ENCODE measurements at regions of chr19 and their contacts with region 1.

Region 1: DNA sequence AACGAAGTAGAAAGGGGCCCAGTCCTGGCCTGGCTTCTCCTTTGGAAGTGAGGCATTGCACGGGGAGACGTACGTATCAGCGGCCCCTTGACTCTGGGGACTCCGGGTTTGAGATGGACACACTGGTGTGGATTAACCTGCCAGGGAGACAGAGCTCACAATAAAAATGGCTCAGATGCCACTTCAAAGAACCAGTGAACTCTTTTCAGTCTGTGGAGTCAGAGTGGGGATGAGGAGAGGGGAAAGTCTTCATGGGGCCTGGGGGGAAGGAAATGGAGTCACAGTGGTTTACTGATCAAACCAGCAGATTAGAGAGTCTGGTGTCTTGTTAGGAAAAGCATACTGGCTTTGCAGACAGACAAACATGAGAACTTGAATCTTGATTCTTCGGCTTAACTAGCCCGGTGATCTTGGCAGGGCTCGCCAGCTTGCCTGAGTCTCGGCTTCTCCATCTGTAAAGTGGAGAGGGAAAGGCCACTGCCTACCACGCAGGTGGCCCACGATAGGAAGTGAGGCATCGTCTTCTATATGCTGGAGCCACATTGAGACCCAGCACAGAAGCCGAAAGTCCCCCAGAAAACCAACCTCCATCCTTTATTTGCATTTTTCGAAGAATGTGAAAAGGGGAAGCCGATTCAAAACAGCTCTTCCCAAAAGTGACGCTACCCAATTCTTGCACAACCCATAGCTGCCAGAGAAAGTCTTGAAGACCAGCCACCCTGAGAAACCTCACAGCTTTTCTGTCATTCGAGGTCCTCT is at the start of gene FFAR1:
- DNase-seq: peak; percentile 64
- ATAC-seq: peak; percentile 66
- H3K4me3 Mint-ChIP-seq: peak within 1 kb of the TSS; percentile 74
- H3K27ac Mint-ChIP-seq: peak within 1 kb of the TSS; percentile 98
- H3K4me1 Mint-ChIP-seq: peaks cover 84% of the 10 kb centered on the region
- H3K27me3 Mint-ChIP-seq: peaks cover 2% of the 10 kb centered on the region
- CTCF ChIP-seq: no peak
- total RNA-seq, gene FFAR1: 5.1 and 6.0 TPM in 2 replicates

Region 2: DNA sequence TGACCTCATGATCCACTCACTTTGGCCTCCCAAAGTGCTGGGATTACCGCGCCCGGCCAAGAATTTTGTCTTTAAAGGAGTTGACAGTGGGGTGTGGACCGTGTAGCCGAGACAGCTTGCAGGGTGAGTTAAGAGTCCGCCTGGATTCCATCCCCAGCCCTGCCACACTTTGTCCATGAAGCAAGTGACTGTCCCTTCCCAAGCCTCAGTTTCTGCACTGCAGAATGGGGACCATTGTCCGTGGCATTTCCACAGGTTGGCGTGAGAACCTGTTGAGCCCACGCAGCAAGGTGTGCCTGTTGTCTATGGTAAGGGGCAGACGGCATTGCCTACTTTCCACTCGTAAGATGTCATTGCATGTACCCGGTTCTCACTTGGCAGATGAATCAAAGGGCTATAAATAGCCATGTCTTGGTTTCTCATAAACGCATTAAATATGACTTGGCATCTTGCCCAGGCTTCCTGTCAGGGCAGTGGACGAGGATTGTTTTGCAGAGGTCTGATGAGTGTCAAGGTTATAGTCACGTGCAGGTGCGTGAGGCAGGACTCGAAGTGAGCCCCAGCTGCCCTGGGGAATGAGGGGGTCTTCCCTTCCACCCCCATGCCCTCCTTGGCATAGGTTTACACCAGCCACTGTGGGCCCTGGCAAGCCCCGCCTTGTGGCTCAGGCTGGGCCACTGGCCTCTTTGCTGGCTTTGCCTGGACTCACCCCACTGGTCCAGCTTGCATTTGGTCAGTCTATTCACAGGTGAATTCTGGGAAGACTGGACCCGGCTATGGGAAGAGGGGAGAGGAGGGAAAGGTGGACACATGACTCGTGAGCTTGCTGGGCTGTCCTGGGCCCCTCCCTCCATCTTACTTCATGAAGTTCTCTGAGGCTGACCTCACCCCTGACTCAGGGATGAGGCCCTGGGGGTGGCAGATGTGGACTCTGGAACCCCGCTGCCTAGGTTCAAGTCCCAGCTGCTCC is 133.4 kb before region 1 on chr19:
- CTCF ChIA-PET with region 1: no interaction called
- POLR2A ChIA-PET with region 1: interaction called, 6 read pairs
- intact Hi-C with region 1: loop called (anchors 1 kb)
- DNase-seq: peak; percentile 74
- ATAC-seq: peak; percentile 75
- H3K4me3 Mint-ChIP-seq: peak overlapping the region; percentile 65
- H3K27ac Mint-ChIP-seq: peak overlapping the region; percentile 98
- H3K4me1 Mint-ChIP-seq: peaks cover 79% of the 10 kb centered on the region
- H3K27me3 Mint-ChIP-seq: no peaks in the 10 kb centered on the region
- CTCF ChIP-seq: no peak

Region 3: GRCh38 chr19:35295792-35296462 is 51.4 kb before region 1 on chr19:
- CTCF ChIA-PET with region 1: no interaction called
- POLR2A ChIA-PET with region 1: interaction called, 44 read pairs
- intact Hi-C with region 1: no loop called
- DNase-seq: peak; percentile 50
- ATAC-seq: peak; percentile 80
- H3K4me3 Mint-ChIP-seq: peak overlapping the region; percentile 12
- H3K27ac Mint-ChIP-seq: peak overlapping the region; percentile 48
- H3K4me1 Mint-ChIP-seq: peaks cover 24% of the 10 kb centered on the region
- H3K27me3 Mint-ChIP-seq: no peaks in the 10 kb centered on the region
- CTCF ChIP-seq: no peak

Region 4: GRCh38 chr19:35337097-35337983 is 10.0 kb before region 1 on chr19:
- CTCF ChIA-PET with region 1: interaction called, 37 read pairs
- POLR2A ChIA-PET with region 1: interaction called, 645 read pairs
- intact Hi-C with region 1: loop called (anchors 1 kb)
- DNase-seq: no peak
- ATAC-seq: peak; percentile 47
- H3K4me3 Mint-ChIP-seq: peak overlapping the region; percentile 72
- H3K27ac Mint-ChIP-seq: peak overlapping the region; percentile 95
- H3K4me1 Mint-ChIP-seq: peaks cover 86% of the 10 kb centered on the region
- H3K27me3 Mint-ChIP-seq: no peaks in the 10 kb centered on the region
- CTCF ChIP-seq: no peak

Region 5: GRCh38 chr19:35495107-35496064 is 148.0 kb after region 1 on chr19:
- CTCF ChIA-PET with region 1: interaction called, 66 read pairs
- POLR2A ChIA-PET with region 1: interaction called, 11 read pairs
- intact Hi-C with region 1: loop called (anchors 1 kb)
- DNase-seq: peak; percentile 62
- ATAC-seq: peak; percentile 100
- H3K4me3 Mint-ChIP-seq: no peak overlapping the region
- H3K27ac Mint-ChIP-seq: no peak overlapping the region
- H3K4me1 Mint-ChIP-seq: peaks cover 8% of the 10 kb centered on the region
- H3K27me3 Mint-ChIP-seq: peaks cover 5% of the 10 kb centered on the region
- CTCF ChIP-seq: peak; percentile 67

Measured in activated B cell treated with CpG ODN at 0.5 μM for 24 hours (primary cell).